ENCODE measurements at regions of chr6 and their contacts with region 1.

Region 1: DNA sequence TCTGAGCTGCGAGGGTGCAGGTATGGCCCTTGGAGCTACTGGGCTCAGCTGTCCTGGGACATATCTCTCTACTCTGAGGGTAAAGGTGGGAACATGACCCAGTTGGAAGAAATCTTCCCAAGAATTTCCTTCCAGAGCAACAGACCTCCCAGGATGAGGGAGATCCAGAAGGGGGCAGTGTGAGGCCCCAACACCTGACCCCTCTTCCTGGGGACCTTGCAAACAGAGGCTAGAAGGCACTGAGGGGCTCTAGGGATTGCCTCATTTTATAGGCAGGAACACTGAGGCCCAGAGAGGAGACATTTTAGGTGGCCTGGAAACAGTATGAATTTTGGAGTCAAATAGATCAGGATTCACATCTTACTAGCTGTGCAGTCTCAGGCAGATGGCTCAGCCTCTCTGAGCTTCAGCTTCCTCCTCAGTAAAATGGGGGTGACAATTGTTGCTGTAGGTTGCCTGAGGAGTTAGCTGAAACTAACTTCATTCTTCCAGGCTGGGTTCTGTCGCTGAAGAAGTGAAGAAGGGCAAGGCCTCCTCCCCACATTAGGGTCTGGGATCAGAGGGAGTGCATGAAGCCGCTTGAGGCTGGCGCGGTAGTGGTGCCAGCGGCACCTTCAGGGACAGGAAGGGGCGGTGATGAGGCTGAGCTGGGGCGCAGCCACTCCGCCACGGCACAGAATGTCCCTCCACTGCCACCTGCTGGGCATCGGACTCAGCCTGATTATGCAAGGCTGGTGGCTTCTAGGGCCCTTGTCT is 11.4 kb downstream of the KCNK17 start:
- DNase-seq: peak; percentile 76 to 90 (median 86)
- ATAC-seq: peak; percentile 99
- H3K4me3 ChIP-seq: peak overlapping the region in 1 of 2 experiments; percentile 27
- H3K4me3 Mint-ChIP-seq: peak overlapping the region; percentile 70
- H3K27ac ChIP-seq: no peak overlapping the region
- H3K27ac Mint-ChIP-seq: no peak overlapping the region
- H3K4me1 ChIP-seq: no peaks in the 10 kb centered on the region
- H3K4me1 Mint-ChIP-seq: peaks cover 6% of the 10 kb centered on the region
- H3K27me3 ChIP-seq: no peaks in the 10 kb centered on the region
- H3K27me3 Mint-ChIP-seq: no peaks in the 10 kb centered on the region
- CTCF ChIP-seq: peak; percentile 74

Region 2: GRCh38 chr6:38973178-38974054 is 329.4 kb before region 1 on chr6:
- CTCF ChIA-PET with region 1: interaction called, 11 read pairs
- POLR2A ChIA-PET with region 1: no interaction called
- intact Hi-C with region 1: loop called in 1 of 2 experiments (anchors 2 kb)
- DNase-seq: peak in 2 of 9 experiments; percentile 46 to 58
- ATAC-seq: peak; percentile 70
- H3K4me3 ChIP-seq: no peak overlapping the region
- H3K4me3 Mint-ChIP-seq: no peak overlapping the region
- H3K27ac ChIP-seq: no peak overlapping the region
- H3K27ac Mint-ChIP-seq: no peak overlapping the region
- H3K4me1 ChIP-seq: no peaks in the 10 kb centered on the region
- H3K4me1 Mint-ChIP-seq: no peaks in the 10 kb centered on the region
- H3K27me3 ChIP-seq: peaks cover 0 to 2% of the 10 kb centered on the region in 2 experiments
- H3K27me3 Mint-ChIP-seq: peaks cover 10% of the 10 kb centered on the region
- CTCF ChIP-seq: peak; percentile 38

Region 3: GRCh38 chr6:38997128-38997761 is 305.6 kb before region 1 on chr6:
- CTCF ChIA-PET with region 1: interaction called, 20 read pairs
- POLR2A ChIA-PET with region 1: no interaction called
- intact Hi-C with region 1: loop called in 1 of 2 experiments (anchors 1 kb)
- DNase-seq: peak; percentile 6 to 50 (median 26)
- ATAC-seq: no peak
- H3K4me3 ChIP-seq: no peak overlapping the region
- H3K4me3 Mint-ChIP-seq: no peak overlapping the region
- H3K27ac ChIP-seq: no peak overlapping the region
- H3K27ac Mint-ChIP-seq: no peak overlapping the region
- H3K4me1 ChIP-seq: no peaks in the 10 kb centered on the region
- H3K4me1 Mint-ChIP-seq: no peaks in the 10 kb centered on the region
- H3K27me3 ChIP-seq: no peaks in the 10 kb centered on the region
- H3K27me3 Mint-ChIP-seq: peaks cover 44% of the 10 kb centered on the region
- CTCF ChIP-seq: peak; percentile 48

Region 4: GRCh38 chr6:39088331-39088730 is 214.5 kb before region 1 on chr6:
- CTCF ChIA-PET with region 1: interaction called, 5 read pairs
- POLR2A ChIA-PET with region 1: no interaction called
- intact Hi-C with region 1: loop called (anchors 2 to 5 kb)
- DNase-seq: peak in 3 of 9 experiments; percentile 28 to 47 (median 44)
- ATAC-seq: peak; percentile 34
- H3K4me3 ChIP-seq: no peak overlapping the region
- H3K4me3 Mint-ChIP-seq: no peak overlapping the region
- H3K27ac ChIP-seq: no peak overlapping the region
- H3K27ac Mint-ChIP-seq: no peak overlapping the region
- H3K4me1 ChIP-seq: no peaks in the 10 kb centered on the region
- H3K4me1 Mint-ChIP-seq: no peaks in the 10 kb centered on the region
- H3K27me3 ChIP-seq: no peaks in the 10 kb centered on the region
- H3K27me3 Mint-ChIP-seq: peaks cover 18% of the 10 kb centered on the region
- CTCF ChIP-seq: no peak

Region 5: GRCh38 chr6:39402239-39402751 is 99.4 kb after region 1 on chr6:
- CTCF ChIA-PET with region 1: no interaction called
- POLR2A ChIA-PET with region 1: no interaction called
- intact Hi-C with region 1: no loop called
- DNase-seq: no peak
- ATAC-seq: no peak
- H3K4me3 ChIP-seq: no peak overlapping the region
- H3K4me3 Mint-ChIP-seq: no peak overlapping the region
- H3K27ac ChIP-seq: no peak overlapping the region
- H3K27ac Mint-ChIP-seq: no peak overlapping the region
- H3K4me1 ChIP-seq: no peaks in the 10 kb centered on the region
- H3K4me1 Mint-ChIP-seq: no peaks in the 10 kb centered on the region
- H3K27me3 ChIP-seq: no peaks in the 10 kb centered on the region
- H3K27me3 Mint-ChIP-seq: no peaks in the 10 kb centered on the region
- CTCF ChIP-seq: no peak